ENCODE measurements at regions of chr21 and their contacts with region 1.

Region 1: GRCh38 chr21:42593007-42593806 is 60.2 kb upstream of the PDE9A start:
- DNase-seq: peak; percentile 51
- H3K4me3 ChIP-seq: peak overlapping the region in 2 of 3 experiments; percentile 16 to 33
- H3K27ac ChIP-seq: no peak overlapping the region
- H3K4me1 ChIP-seq: no peaks in the 10 kb centered on the region
- H3K27me3 ChIP-seq: no peaks in the 10 kb centered on the region
- CTCF ChIP-seq: peak; percentile 46 to 85

Region 2: DNA sequence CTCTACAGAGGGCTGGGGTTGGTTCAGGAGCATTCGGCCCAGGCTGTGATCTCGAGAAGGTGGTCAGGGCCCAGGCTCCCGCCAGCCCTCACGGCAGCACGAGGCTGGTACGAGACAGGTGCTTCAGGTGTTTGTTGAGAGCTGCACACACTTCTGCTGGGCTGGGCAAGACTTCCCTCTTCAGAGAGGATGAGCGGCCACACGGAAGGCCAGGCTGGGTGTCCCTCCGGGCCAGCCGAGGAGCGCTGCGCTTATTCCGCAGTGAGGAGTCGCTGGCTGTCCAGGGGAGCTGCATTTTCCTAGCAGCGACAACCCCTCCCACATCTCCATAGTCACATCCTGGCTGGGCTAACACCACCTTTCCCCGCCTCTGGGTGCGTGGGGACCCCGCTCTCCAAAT is 110.8 kb after region 1 on chr21:
- CTCF ChIA-PET with region 1: no interaction called
- dilution Hi-C with region 1: loop called (anchors 5 kb)
- in situ Hi-C with region 1: no loop called
- intact Hi-C with region 1: no loop called
- DNase-seq: no peak
- H3K4me3 ChIP-seq: no peak overlapping the region
- H3K27ac ChIP-seq: no peak overlapping the region
- H3K4me1 ChIP-seq: no peaks in the 10 kb centered on the region
- H3K27me3 ChIP-seq: no peaks in the 10 kb centered on the region
- CTCF ChIP-seq: no peak

Region 3: DNA sequence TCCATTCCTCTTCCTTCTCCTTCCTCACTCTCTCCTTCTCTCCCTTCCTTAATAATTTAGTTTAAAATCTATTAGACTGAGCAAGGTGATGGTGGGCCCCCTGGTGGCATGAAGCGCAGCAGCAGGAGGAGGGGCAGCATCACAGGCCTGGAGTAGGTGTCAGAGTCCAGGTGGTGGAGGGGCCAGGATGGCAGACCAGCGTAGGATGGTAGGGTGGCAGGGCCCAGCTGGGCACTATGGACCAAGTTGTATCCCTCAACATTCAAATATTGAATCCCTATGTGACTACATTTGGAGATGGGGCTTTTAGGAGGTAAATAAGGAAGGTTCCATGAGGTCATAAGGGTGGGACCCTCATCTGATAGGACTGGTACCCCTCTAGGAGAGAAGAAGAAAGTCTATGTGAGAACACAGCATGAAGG is 225.1 kb after region 1 on chr21:
- CTCF ChIA-PET with region 1: interaction called, 7 read pairs
- dilution Hi-C with region 1: loop called (anchors 5 kb)
- in situ Hi-C with region 1: loop called (anchors 5 to 10 kb)
- intact Hi-C with region 1: loop called (anchors 5 kb)
- DNase-seq: peak; percentile 45
- H3K4me3 ChIP-seq: no peak overlapping the region
- H3K27ac ChIP-seq: no peak overlapping the region
- H3K4me1 ChIP-seq: no peaks in the 10 kb centered on the region
- H3K27me3 ChIP-seq: no peaks in the 10 kb centered on the region
- CTCF ChIP-seq: peak; percentile 92 to 93

Region 4: GRCh38 chr21:42858185-42858847 is 265.1 kb after region 1 on chr21:
- CTCF ChIA-PET with region 1: no interaction called
- dilution Hi-C with region 1: loop called (anchors 5 kb)
- in situ Hi-C with region 1: no loop called
- intact Hi-C with region 1: no loop called
- DNase-seq: no peak
- H3K4me3 ChIP-seq: no peak overlapping the region
- H3K27ac ChIP-seq: no peak overlapping the region
- H3K4me1 ChIP-seq: no peaks in the 10 kb centered on the region
- H3K27me3 ChIP-seq: no peaks in the 10 kb centered on the region
- CTCF ChIP-seq: no peak

Region 5: GRCh38 chr21:42905195-42905594 is 312.0 kb after region 1 on chr21:
- CTCF ChIA-PET with region 1: no interaction called
- dilution Hi-C with region 1: loop called (anchors 10 kb)
- in situ Hi-C with region 1: no loop called
- intact Hi-C with region 1: no loop called
- DNase-seq: no peak
- H3K4me3 ChIP-seq: no peak overlapping the region
- H3K27ac ChIP-seq: no peak overlapping the region
- H3K4me1 ChIP-seq: no peaks in the 10 kb centered on the region
- H3K27me3 ChIP-seq: no peaks in the 10 kb centered on the region
- CTCF ChIP-seq: no peak